ENCODE measurements at regions of chr10 and their contacts with region 1.

Region 1: DNA sequence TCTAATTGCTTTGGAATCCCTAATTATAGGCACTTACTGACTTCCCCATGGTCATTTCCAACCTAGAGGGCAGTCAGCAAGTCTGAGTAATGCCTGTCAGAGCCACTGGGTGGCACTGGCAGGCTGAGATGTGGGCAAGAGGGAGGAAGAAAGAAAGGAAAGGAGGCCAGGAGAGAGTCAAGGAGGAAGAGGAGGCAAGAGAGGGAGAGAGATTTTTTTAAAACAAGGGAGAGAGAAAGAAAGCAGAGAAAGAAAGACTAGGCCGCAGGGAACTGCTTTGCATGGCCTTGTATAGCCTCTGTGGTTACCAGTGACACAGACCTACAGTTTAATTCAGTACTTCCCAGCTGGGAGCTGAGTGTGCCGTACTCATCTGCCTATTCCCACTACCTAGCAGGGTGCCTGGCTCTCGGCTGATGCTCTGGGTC is 210.4 kb upstream of the ADO start:
- DNase-seq: peak; percentile 51
- H3K4me3 ChIP-seq: no peak overlapping the region
- H3K27ac ChIP-seq: no peak overlapping the region
- H3K4me1 ChIP-seq: peaks cover 7% of the 10 kb centered on the region
- H3K27me3 ChIP-seq: peaks cover 0 to 2% of the 10 kb centered on the region in 2 experiments
- CTCF ChIP-seq: peak; percentile 74 to 81
- POLR2A ChIP-seq: no peak

Region 2: GRCh38 chr10:62527019-62527827 is 66.9 kb before region 1 on chr10:
- CTCF ChIA-PET with region 1: no interaction called
- POLR2A ChIA-PET with region 1: no interaction called
- dilution Hi-C with region 1: no loop called
- intact Hi-C with region 1: no loop called
- DNase-seq: no peak
- H3K4me3 ChIP-seq: no peak overlapping the region
- H3K27ac ChIP-seq: no peak overlapping the region
- H3K4me1 ChIP-seq: no peaks in the 10 kb centered on the region
- H3K27me3 ChIP-seq: no peaks in the 10 kb centered on the region
- CTCF ChIP-seq: no peak
- POLR2A ChIP-seq: no peak

Region 3: GRCh38 chr10:63003816-63004453 is 409.8 kb after region 1 on chr10:
- CTCF ChIA-PET with region 1: no interaction called
- POLR2A ChIA-PET with region 1: no interaction called
- dilution Hi-C with region 1: no loop called
- intact Hi-C with region 1: loop called (anchors 5 kb)
- DNase-seq: no peak
- H3K4me3 ChIP-seq: no peak overlapping the region
- H3K27ac ChIP-seq: no peak overlapping the region
- H3K4me1 ChIP-seq: no peaks in the 10 kb centered on the region
- H3K27me3 ChIP-seq: no peaks in the 10 kb centered on the region
- CTCF ChIP-seq: peak in 1 of 2 donors; percentile 16
- POLR2A ChIP-seq: no peak

Region 4: DNA sequence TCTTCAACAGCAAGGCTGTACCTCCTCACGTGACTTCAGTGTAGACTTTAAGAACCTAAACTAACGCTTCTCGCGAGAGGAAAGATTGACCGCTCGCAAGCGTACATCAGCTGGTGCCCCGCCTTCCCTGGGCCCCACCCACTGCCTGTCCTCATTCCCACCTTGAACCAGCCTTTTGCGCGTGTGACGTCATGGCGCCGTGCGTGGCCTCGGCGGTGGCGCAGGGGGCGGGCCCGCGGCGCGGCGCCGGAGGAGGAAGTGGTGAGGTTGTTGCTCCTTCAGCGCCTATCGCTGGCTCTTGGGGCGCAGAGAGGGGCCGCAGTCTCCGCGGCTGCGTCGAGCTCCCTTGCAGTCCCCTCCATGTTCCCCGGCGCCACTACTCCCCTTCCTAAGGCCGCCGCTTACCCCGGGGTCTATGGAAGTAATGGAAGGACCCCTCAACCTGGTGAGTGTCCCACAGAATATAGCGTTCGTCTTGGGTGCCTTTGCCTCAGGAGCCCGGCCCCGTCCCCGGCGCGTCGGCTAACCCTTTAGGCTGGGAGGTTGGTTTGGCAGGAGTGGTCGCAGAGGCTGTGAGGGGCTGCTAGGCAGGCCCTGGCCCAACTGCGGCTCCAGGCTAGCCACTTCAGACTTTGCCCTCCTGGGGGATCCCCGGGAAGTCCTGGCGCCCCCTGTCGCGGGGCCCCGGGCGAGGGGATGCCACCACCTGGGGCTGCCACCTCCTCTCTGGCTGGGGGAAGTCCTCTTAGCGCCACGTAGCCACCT is 539.1 kb after region 1 on chr10 and contains the start of gene NRBF2:
- CTCF ChIA-PET with region 1: interaction called, 5 read pairs
- POLR2A ChIA-PET with region 1: no interaction called
- dilution Hi-C with region 1: no loop called
- intact Hi-C with region 1: loop called (anchors 5 kb)
- DNase-seq: peak; percentile 98
- H3K4me3 ChIP-seq: peak within 1 kb of the TSS; percentile 48 to 73 (median 69)
- H3K27ac ChIP-seq: peak within 1 kb of the TSS; percentile 78
- H3K4me1 ChIP-seq: peaks cover 7% of the 10 kb centered on the region
- H3K27me3 ChIP-seq: no peaks in the 10 kb centered on the region
- CTCF ChIP-seq: peak; percentile 10 to 24
- POLR2A ChIP-seq: peak; percentile 97
- total RNA-seq, gene NRBF2: 17.0 and 17.7 TPM in 2 replicates

Measured in endothelial cell of umbilical vein (primary cell).